ENCODE measurements at regions of chr5 and their contacts with region 1.

Region 1: GRCh38 chr5:74136276-74136825 is 504.2 kb downstream of the ENC1 start:
- DNase-seq: no peak
- H3K4me3 ChIP-seq: no peak overlapping the region
- H3K27me3 ChIP-seq: no peaks in the 10 kb centered on the region
- CTCF ChIP-seq: no peak

Region 2: GRCh38 chr5:73985145-73985544 is 151.2 kb before region 1 on chr5:
- CTCF ChIA-PET with region 1: no interaction called
- POLR2A ChIA-PET with region 1: no interaction called
- DNase-seq: no peak
- H3K4me3 ChIP-seq: no peak overlapping the region
- H3K27me3 ChIP-seq: peaks cover 6% of the 10 kb centered on the region
- CTCF ChIP-seq: 0 out of 2 replicates have a peak, but pooled peaks have one; percentile 24

Region 3: DNA sequence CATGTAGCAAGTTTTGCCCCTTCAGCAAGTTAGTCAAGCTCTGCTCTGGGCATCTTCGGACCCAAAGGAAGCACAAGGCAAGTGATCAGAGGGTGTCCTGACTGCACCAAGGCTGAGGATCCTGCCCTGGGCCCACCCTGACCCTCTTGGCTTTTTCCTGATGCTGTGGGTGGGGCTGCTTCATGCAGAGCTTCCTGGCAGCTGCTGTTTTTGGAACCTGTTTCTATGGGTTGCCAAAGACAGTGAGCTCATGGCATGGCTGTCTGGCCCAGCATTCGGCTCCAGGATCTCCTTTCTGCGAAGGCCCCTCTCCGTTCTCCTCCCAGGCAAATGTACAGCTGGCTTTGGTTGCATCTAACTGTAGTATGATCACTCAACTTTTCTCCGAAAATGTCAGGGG is 12.4 kb before region 1 on chr5:
- CTCF ChIA-PET with region 1: interaction called, 12 read pairs
- POLR2A ChIA-PET with region 1: no interaction called
- DNase-seq: no peak
- H3K4me3 ChIP-seq: no peak overlapping the region
- H3K27me3 ChIP-seq: no peaks in the 10 kb centered on the region; the same call in 1 of the 2 replicates
- CTCF ChIP-seq: no peak